ENCODE measurements at regions of chr3 and their contacts with region 1.

Region 1: GRCh38 chr3:86785386-86785785 is 205.6 kb downstream of the VGLL3 start:
- DNase-seq: no peak
- ATAC-seq: peak in 1 of 8 donors; percentile 38
- H3K4me3 ChIP-seq: no peak overlapping the region
- H3K27ac ChIP-seq: no peak overlapping the region
- H3K4me1 ChIP-seq: no peaks in the 10 kb centered on the region
- H3K27me3 ChIP-seq: no peaks in the 10 kb centered on the region
- CTCF ChIP-seq: peak in 7 of 9 donors; percentile 15 to 41 (median 24)

Region 2: GRCh38 chr3:86733257-86733656 is 52.1 kb before region 1 on chr3:
- intact Hi-C with region 1: no loop called
- DNase-seq: no peak
- ATAC-seq: no peak
- H3K4me3 ChIP-seq: no peak overlapping the region
- H3K27ac ChIP-seq: no peak overlapping the region
- H3K4me1 ChIP-seq: no peaks in the 10 kb centered on the region
- H3K27me3 ChIP-seq: no peaks in the 10 kb centered on the region
- CTCF ChIP-seq: no peak

Region 3: DNA sequence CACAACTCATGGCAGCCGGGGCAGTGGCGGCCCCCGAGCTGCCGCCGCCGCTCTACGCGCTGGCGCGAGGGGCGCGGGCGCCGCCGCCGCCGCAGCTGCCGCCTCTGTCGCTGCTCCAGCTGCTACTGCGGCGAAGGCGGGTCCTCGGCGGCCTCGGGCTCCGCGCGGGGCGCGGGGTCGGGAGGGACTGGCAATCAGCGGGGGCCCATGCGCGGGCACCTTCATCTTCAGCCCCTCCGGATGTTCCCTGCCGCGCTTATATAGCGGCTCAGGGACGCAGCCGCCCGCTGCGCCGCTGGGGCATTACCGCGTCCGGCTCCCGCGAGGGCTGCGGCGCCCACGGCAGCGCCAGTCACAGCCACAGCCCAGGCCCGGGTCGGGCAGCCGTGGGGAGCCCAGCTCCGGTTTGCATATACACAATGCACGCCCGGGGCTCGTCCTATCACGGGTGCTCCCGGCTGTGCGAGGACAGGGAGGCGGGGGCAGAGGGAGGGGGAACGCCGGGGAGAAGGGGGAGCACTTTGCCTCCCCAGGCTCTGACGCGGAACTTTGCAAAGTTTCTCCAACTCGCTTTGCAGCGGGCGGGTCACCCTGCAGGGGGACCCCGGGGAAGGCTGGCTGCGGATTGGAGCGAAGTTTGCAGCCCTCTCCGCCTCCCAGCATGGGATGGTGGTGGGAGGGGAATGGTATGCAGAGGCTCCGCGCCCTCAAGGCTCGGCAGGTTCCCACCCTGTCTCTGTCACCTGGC is 205.5 kb after region 1 on chr3 and contains the start of gene VGLL3:
- intact Hi-C with region 1: loop called in 1 of 10 experiments (anchors 10 kb)
- DNase-seq: peak; percentile 33 to 72
- ATAC-seq: peak; percentile 74 to 91 (median 82)
- H3K4me3 ChIP-seq: peak within 1 kb of the TSS; percentile 7 to 65 (median 62)
- H3K27ac ChIP-seq: peak within 1 kb of the TSS; percentile 23 to 81 (median 68)
- H3K4me1 ChIP-seq: peaks cover 0 to 21% (median 5%) of the 10 kb centered on the region in 9 donors
- H3K27me3 ChIP-seq: peaks cover 0 to 42% (median 20%) of the 10 kb centered on the region in 7 donors
- CTCF ChIP-seq: peak in 1 of 9 donors; percentile 20
- total RNA-seq, gene VGLL3: 1.3 to 15.3 (median 4.2) TPM

Region 4: GRCh38 chr3:87088993-87089841 is 303.8 kb after region 1 on chr3:
- intact Hi-C with region 1: loop called in 1 of 10 experiments (anchors 5 kb)
- DNase-seq: peak; percentile 39 to 55
- ATAC-seq: peak; percentile 88 to 97 (median 92)
- H3K4me3 ChIP-seq: peak overlapping the region; percentile 33 to 71 (median 58)
- H3K27ac ChIP-seq: peak overlapping the region; percentile 66 to 91 (median 80)
- H3K4me1 ChIP-seq: peaks cover 0 to 13% (median 3%) of the 10 kb centered on the region in 9 donors
- H3K27me3 ChIP-seq: peaks cover 0 to 3% (median 0%) of the 10 kb centered on the region in 7 donors
- CTCF ChIP-seq: no peak

Measured in heart right ventricle (tissue), 16 donors.